ENCODE measurements at regions of chr5 and their contacts with region 1.

Region 1: GRCh38 chr5:133546500-133546899 is 65.8 kb downstream of the FSTL4 start:
- DNase-seq: no peak
- H3K4me3 ChIP-seq: no peak overlapping the region
- H3K27ac ChIP-seq: no peak overlapping the region
- H3K4me1 ChIP-seq: no peaks in the 10 kb centered on the region
- H3K27me3 ChIP-seq: no peaks in the 10 kb centered on the region
- CTCF ChIP-seq: no peak

Region 2: DNA sequence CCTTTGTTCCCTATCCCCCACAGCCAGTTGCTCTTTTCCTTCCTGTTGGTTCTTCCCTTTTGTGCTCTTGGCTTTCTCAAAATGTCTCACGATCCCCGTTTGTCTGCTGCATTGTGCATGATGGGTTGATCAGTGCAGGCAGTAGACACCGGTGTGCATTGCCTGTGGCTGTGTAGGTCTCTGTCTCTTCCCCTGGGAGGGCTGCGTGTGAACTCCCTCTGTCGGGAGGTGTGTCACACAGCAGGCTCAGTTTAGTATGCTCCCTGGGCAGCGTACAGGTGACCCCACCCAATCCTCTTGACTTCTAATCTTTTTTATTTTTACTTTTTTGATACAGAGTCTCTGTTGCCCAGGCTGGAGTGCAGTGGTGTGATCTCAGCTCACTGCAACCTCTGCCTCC is 199.5 kb before region 1 on chr5:
- CTCF ChIA-PET with region 1: no interaction called
- POLR2A ChIA-PET with region 1: no interaction called
- intact Hi-C with region 1: no loop called
- DNase-seq: no peak
- H3K4me3 ChIP-seq: no peak overlapping the region
- H3K27ac ChIP-seq: no peak overlapping the region
- H3K4me1 ChIP-seq: 0 out of 2 replicates have a peak, but pooled peaks cover 8% of the 10 kb centered on the region
- H3K27me3 ChIP-seq: no peaks in the 10 kb centered on the region
- CTCF ChIP-seq: no peak

Region 3: DNA sequence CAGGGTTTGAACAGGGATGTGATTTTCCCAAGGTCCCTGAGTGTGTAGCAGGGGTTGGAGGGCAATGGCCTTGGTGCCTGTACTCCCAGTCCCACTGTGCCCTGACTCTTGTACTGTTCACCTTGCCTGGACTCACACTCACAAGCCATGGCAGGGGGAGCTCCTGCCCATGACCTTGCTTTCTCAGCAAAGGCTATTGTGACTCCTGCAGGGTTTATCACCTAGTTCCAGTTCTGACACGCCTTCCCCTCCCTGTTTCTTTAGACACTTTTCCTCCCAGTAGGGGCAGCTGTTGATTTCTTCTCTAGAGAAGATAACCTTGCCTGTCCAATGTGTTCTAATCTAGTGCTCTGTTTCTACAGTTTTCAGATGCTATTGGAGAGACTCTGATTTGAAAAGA is 73.7 kb before region 1 on chr5:
- CTCF ChIA-PET with region 1: no interaction called
- POLR2A ChIA-PET with region 1: no interaction called
- intact Hi-C with region 1: loop called (anchors 2 kb)
- DNase-seq: no peak
- H3K4me3 ChIP-seq: no peak overlapping the region
- H3K27ac ChIP-seq: no peak overlapping the region
- H3K4me1 ChIP-seq: 0 out of 2 replicates have a peak, but pooled peaks cover 9% of the 10 kb centered on the region
- H3K27me3 ChIP-seq: no peaks in the 10 kb centered on the region
- CTCF ChIP-seq: no peak

Measured in PC-9 (cell line).